A673 (cell line): ENCODE measurements at regions of chr2 and their contacts with region 1.

Region 1: GRCh38 chr2:201860636-201861066 is 54.3 kb downstream of the CDK15 start:
- DNase-seq: peak; percentile 89
- H3K4me3 ChIP-seq: no peak overlapping the region
- H3K27ac ChIP-seq: no peak overlapping the region
- H3K4me1 ChIP-seq: peaks cover 35% of the 10 kb centered on the region
- H3K27me3 ChIP-seq: no peaks in the 10 kb centered on the region
- CTCF ChIP-seq: peak; percentile 85

Region 2: DNA sequence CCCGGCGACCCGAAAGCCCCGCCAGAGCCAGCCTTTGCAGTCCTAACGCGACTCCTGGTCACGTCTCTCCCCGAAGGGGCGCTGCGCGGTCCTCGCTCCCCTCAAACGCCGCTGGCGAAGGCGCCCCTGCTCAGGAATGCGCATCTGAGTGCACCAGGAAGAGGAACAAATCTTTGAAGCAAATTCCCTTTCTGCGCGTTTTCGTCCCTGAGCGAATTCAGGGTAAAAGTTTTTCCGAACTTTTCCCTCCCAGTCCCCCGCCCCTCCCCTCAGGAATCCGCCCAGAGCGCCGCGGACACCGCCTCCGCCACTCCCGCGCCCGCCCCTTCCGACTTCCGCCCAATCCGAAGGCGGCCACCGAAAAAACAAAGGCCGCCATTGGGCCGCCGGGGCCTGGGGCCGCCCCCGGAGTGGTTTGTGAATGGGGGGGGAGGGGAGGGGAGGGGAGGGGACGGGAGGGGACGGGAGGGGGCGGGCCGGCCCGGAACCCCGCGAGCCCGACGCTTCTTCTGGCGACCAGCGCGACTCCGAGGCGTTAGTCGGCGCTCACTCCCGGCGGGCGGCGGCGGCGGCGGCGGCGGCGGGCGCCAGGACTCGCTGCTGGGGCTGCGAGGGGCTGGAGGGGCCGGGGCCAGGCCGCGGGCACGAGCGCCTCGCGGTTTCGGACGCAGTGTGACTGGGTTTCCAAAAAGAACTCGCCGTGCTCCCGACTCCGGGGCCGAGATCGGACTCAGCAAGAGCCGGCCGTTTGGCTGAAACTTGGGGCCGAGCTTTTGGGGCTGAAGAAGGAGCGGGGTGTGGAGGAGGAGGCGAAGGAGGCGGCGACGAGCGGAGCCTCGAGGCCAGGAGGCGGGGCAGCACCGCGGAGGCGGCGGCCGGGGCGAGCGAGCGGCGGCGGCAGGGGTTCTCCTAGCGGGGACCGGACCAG is 172.9 kb after region 1 on chr2 and contains the start of gene FZD7:
- CTCF ChIA-PET with region 1: no interaction called
- POLR2A ChIA-PET with region 1: no interaction called
- intact Hi-C with region 1: loop called (anchors 1 kb)
- DNase-seq: peak; percentile 97
- H3K4me3 ChIP-seq: peak within 1 kb of the TSS; percentile 85
- H3K27ac ChIP-seq: peak within 1 kb of the TSS; percentile 95
- H3K4me1 ChIP-seq: peaks cover 38% of the 10 kb centered on the region
- H3K27me3 ChIP-seq: no peaks in the 10 kb centered on the region
- CTCF ChIP-seq: peak; percentile 28
- total RNA-seq, gene FZD7: 14.1 and 15.1 TPM in 2 replicates